ENCODE measurements at regions of chr14 and their contacts with region 1.

Region 1: GRCh38 chr14:61321385-61322010 is at the start of gene PRKCH:
- ATAC-seq: peak; percentile 47 to 92 (median 72)
- H3K4me3 ChIP-seq: peak within 1 kb of the TSS; percentile 20 to 38 (median 29)
- H3K27ac ChIP-seq: no peak within 1 kb of the TSS
- H3K4me1 ChIP-seq: no peaks in the 10 kb centered on the region
- total RNA-seq, gene PRKCH: 0.33 to 12.9 (median 1.6) TPM

Region 2: DNA sequence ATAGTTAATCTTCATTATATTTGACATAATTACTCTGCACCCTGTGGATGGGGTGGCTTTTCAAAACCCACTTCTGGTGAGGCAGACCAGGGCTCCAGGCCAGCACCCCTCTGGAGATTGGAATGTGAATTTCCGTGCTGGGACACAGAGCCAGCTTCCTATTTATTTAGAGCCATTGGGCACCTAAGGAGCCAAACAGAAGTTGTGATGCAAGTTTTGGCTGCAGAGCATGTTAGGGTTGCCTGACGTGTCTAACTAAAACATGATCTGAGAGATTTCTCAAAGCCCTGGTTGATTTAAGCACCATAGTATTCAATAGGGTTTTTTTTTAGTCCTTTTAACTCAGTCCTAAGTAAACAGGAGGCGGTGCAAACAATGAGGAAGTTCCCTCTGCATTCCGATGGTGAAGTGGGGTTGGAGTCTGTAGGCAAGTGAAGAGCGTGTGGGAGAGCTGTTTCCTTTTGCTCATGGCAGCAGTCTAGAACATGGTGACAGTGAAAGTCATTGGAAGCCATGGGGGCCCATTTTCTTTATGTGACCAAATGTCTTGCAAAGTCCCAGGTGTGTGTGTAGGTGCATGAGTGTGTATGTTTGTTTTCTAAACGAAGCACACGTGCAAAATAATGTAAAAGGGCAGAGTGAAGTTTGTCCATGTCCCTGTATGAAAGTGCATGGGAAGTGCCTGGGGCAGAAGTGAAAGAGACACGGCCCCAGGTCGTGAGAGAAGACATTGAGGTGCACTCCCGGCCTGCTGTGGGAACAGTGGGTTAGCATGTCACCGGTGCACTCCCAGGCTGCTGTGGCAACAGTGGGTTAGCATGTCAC is 117.6 kb after region 1 on chr14:
- in situ Hi-C with region 1: loop called in 1 of 9 experiments (anchors 25 kb)
- ATAC-seq: peak in 6 of 8 experiments; percentile 54 to 97 (median 62)
- H3K4me3 ChIP-seq: no peak overlapping the region
- H3K27ac ChIP-seq: no peak overlapping the region
- H3K4me1 ChIP-seq: no peaks in the 10 kb centered on the region

Region 3: GRCh38 chr14:61860294-61860918 is 538.9 kb after region 1 on chr14:
- in situ Hi-C with region 1: loop called in 1 of 9 experiments (anchors 25 kb)
- ATAC-seq: peak in 3 of 8 experiments; percentile 77 to 89 (median 86)
- H3K4me3 ChIP-seq: no peak overlapping the region
- H3K27ac ChIP-seq: no peak overlapping the region
- H3K4me1 ChIP-seq: no peaks in the 10 kb centered on the region